Mammary epithelial cell (primary cell): ENCODE measurements at regions of chr15 and their contacts with region 1.

Region 1: GRCh38 chr15:33322091-33322490 is 11.3 kb downstream of the RYR3 start:
- DNase-seq: no peak
- H3K4me3 ChIP-seq: no peak overlapping the region
- H3K27ac ChIP-seq: no peak overlapping the region
- H3K4me1 ChIP-seq: no peaks in the 10 kb centered on the region
- H3K27me3 ChIP-seq: peaks cover under 1% of the 10 kb centered on the region
- CTCF ChIP-seq: no peak

Region 2: DNA sequence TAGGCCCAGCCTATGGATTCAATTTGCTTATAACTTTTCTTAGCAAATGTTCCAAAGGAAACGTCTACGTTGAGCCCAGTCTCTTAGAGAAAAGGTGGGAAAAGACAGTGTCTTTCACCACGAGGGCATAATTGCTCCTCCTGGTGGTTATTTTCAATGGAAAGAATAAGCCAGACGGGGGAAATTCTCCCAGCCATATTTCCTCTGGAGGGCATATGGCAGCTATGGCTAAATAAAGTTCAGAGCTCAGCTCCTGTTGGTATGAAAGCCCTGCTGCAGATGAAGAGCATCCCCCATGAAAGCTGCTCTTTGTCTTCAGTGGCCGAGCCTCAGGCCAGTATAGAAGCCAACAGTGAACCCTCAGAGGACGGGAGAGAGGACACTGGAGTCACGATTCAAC is 286.6 kb after region 1 on chr15:
- CTCF ChIA-PET with region 1: no interaction called
- dilution Hi-C with region 1: no loop called
- in situ Hi-C with region 1: no loop called
- intact Hi-C with region 1: loop called (anchors 5 kb)
- DNase-seq: no peak
- H3K4me3 ChIP-seq: no peak overlapping the region
- H3K27ac ChIP-seq: no peak overlapping the region
- H3K4me1 ChIP-seq: no peaks in the 10 kb centered on the region
- H3K27me3 ChIP-seq: no peaks in the 10 kb centered on the region
- CTCF ChIP-seq: peak; percentile 28 to 45

Region 3: DNA sequence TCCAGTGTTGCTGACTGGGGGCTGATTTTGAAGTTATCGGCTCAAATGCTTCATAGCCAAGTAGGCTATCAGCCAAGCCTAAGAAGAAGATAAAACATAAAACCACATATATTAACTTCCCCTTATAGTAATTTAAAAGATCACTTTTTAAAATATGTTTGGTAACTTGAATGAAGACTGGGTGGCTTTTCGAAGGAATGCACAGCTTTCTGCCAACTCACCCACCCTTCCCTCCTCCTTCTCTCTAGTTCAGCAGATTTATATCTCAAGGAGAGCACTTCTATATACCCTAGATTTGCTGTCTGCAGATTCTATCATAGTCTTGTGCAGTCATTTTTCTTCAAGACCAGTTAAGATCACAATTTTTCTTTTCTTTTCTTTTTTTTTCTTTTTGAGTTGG is 456.8 kb after region 1 on chr15:
- CTCF ChIA-PET with region 1: no interaction called
- dilution Hi-C with region 1: no loop called
- in situ Hi-C with region 1: no loop called
- intact Hi-C with region 1: no loop called
- DNase-seq: no peak
- H3K4me3 ChIP-seq: no peak overlapping the region
- H3K27ac ChIP-seq: no peak overlapping the region
- H3K4me1 ChIP-seq: no peaks in the 10 kb centered on the region
- H3K27me3 ChIP-seq: no peaks in the 10 kb centered on the region
- CTCF ChIP-seq: no peak